ENCODE measurements at regions of chr12 and their contacts with region 1.

Region 1: GRCh38 chr12:6723607-6724396 is at the start of gene COPS7A:
- DNase-seq: peak; percentile 99
- H3K4me3 Mint-ChIP-seq: peak within 1 kb of the TSS; percentile 83
- H3K27ac Mint-ChIP-seq: peak within 1 kb of the TSS; percentile 84
- H3K4me1 Mint-ChIP-seq: peaks cover 25% of the 10 kb centered on the region
- H3K27me3 Mint-ChIP-seq: no peaks in the 10 kb centered on the region
- total RNA-seq, gene COPS7A: 37.6 to 39.4 TPM

Region 2: GRCh38 chr12:6554168-6555017 is 169.4 kb before region 1 on chr12:
- CTCF ChIA-PET with region 1: no interaction called
- POLR2A ChIA-PET with region 1: no interaction called
- intact Hi-C with region 1: no loop called
- DNase-seq: peak; percentile 86
- H3K4me3 Mint-ChIP-seq: peak overlapping the region; percentile 85
- H3K27ac Mint-ChIP-seq: peak overlapping the region; percentile 60
- H3K4me1 Mint-ChIP-seq: peaks cover 38% of the 10 kb centered on the region
- H3K27me3 Mint-ChIP-seq: no peaks in the 10 kb centered on the region

Region 3: GRCh38 chr12:6607751-6608591 is 115.8 kb before region 1 on chr12:
- CTCF ChIA-PET with region 1: interaction called, 3 read pairs
- POLR2A ChIA-PET with region 1: interaction called, 8 read pairs
- intact Hi-C with region 1: loop called (anchors 1 kb)
- DNase-seq: peak; percentile 82
- H3K4me3 Mint-ChIP-seq: no peak overlapping the region
- H3K27ac Mint-ChIP-seq: no peak overlapping the region
- H3K4me1 Mint-ChIP-seq: peaks cover 53% of the 10 kb centered on the region
- H3K27me3 Mint-ChIP-seq: no peaks in the 10 kb centered on the region

Region 4: GRCh38 chr12:6662906-6663742 is 60.7 kb before region 1 on chr12 and contains the start of gene ING4:
- CTCF ChIA-PET with region 1: no interaction called
- POLR2A ChIA-PET with region 1: no interaction called
- intact Hi-C with region 1: loop called (anchors 1 kb)
- DNase-seq: peak; percentile 98
- H3K4me3 Mint-ChIP-seq: peak within 1 kb of the TSS; percentile 91
- H3K27ac Mint-ChIP-seq: peak within 1 kb of the TSS; percentile 83
- H3K4me1 Mint-ChIP-seq: peaks cover 22% of the 10 kb centered on the region
- H3K27me3 Mint-ChIP-seq: no peaks in the 10 kb centered on the region
- total RNA-seq, gene ING4: 13.8 to 15.2 TPM

Region 5: GRCh38 chr12:6745741-6746525 is 22.1 kb after region 1 on chr12:
- CTCF ChIA-PET with region 1: no interaction called
- POLR2A ChIA-PET with region 1: interaction called, 8 read pairs
- intact Hi-C with region 1: loop called (anchors 1 kb)
- DNase-seq: peak; percentile 43
- H3K4me3 Mint-ChIP-seq: no peak overlapping the region
- H3K27ac Mint-ChIP-seq: peak overlapping the region; percentile 82
- H3K4me1 Mint-ChIP-seq: peaks cover 41% of the 10 kb centered on the region
- H3K27me3 Mint-ChIP-seq: no peaks in the 10 kb centered on the region

Region 6: DNA sequence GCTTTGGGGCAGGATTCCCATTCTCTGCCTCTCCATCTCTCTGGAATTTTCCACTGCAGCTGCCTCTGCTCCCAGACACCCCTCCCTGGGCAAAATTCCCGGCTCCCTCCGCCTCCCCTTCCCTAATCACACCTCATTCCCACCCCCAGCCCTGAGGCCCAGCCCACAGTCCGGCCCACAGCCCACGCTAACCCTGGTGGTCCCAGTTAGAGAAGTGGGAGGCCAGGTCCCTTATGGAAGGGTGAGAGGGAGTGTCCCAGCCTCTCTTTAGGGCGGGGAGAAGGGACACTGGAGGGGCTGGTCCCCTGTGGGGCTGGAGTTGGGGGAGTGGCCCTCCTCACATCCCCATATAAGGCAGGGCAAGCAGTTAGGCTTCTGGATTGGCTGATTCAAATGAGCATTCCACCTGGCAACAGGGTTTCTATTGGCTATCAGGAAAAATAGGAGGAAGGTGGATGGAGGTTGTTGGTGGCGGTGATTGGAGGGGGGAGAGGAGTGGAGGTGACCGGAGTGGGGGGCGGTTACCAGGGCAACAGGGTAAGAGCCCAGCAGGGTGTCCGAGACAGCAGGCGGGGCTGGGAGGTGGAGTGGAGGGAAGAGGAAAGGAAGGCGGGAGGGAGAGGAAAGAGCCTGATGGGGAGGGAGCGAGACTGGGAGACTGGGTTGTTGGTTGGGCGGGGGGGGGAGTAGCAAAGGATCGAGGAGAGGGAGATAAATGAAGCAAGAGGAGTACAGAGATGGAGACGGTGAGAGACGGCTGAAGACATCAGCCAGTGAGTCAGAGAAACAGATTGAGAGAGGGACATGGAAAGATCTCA is 40.4 kb after region 1 on chr12:
- CTCF ChIA-PET with region 1: interaction called, 15 read pairs
- POLR2A ChIA-PET with region 1: no interaction called
- intact Hi-C with region 1: no loop called
- DNase-seq: peak; percentile 72
- H3K4me3 Mint-ChIP-seq: peak overlapping the region; percentile 40
- H3K27ac Mint-ChIP-seq: no peak overlapping the region
- H3K4me1 Mint-ChIP-seq: peaks cover 29% of the 10 kb centered on the region
- H3K27me3 Mint-ChIP-seq: peaks cover 24% of the 10 kb centered on the region

Region 7: DNA sequence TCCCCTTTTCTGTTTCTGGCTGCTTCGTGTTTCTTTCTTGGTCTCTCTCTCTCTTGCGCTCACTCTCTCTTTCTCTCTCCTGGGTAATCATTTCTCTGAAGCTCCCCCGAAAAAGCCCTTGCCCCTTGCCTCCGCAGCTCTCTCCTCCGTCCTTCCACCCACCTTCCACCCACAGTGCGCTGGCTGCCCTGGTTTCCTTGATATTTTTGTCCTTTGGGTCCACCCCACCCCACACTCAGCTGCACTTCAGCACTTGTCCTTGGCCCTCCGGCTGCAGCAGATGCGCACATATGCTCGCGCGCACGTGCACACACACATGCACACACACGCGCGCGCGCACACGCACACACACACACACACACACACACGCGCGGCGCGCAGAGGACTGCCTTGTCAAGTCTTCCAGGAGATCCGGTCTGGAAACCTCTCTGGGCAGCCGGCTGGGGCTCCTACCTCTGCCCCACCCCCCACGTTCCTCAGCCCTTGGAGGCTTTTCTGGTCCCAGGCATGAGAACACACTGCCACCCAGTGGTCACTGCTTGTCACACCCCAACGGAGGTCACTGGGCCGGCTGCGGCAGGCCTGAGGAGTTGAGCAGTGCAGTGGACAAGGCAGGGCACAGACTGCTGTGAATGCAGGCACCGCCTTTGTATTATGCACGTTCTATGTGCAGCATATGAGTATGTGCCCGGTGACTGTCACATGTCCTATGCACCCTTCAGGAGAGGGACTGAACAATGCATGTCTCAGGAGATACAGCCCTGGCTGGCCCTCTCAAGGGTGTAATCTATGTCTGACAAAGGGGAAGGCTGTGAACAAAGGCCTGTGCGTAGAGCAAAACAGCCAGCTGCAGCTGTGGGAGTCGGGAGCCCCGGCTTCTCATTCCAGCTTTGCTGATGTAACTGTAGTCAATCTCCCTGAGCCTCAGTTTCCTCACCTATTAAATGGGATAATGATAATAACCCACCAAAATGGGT is 55.1 kb after region 1 on chr12:
- CTCF ChIA-PET with region 1: interaction called, 7 read pairs
- POLR2A ChIA-PET with region 1: interaction called, 3 read pairs
- intact Hi-C with region 1: loop called (anchors 1 kb)
- DNase-seq: peak; percentile 94
- H3K4me3 Mint-ChIP-seq: peak overlapping the region; percentile 67
- H3K27ac Mint-ChIP-seq: peak overlapping the region; percentile 46
- H3K4me1 Mint-ChIP-seq: peaks cover 77% of the 10 kb centered on the region
- H3K27me3 Mint-ChIP-seq: no peaks in the 10 kb centered on the region

Region 8: DNA sequence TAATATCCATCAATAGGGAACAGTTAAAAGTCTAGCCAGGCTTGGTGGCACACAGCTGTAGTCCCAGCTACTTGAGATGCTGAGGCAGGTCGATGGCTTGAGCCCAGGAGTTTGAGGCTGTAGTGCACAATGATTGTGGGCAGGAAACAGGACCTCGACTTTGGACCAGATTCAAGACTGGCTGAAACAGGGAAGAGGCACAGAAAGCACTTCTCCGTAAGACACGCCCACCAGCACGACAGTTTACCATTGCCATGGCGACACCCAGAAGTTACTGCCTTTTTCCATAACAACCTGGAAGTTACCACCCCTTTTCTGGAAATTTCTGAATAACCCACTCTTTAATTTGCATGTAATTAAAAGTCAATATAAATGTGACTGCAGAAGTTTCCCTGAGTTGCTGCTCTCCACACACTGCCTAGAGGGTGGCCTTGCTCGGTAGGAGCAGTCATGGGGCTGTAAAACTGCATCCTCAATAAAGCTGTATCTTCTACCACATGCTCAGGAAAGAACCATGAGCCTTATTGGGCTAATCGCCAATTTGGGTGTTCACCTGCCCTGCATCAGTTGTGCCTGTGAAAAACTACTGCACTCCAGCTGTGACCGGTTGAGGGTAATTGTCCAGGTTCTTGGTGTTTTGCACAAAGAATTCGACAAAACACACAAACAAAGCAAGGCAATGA is 176.2 kb after region 1 on chr12:
- CTCF ChIA-PET with region 1: no interaction called
- POLR2A ChIA-PET with region 1: no interaction called
- intact Hi-C with region 1: no loop called
- DNase-seq: peak; percentile 47
- H3K4me3 Mint-ChIP-seq: no peak overlapping the region
- H3K27ac Mint-ChIP-seq: no peak overlapping the region
- H3K4me1 Mint-ChIP-seq: peaks cover 7% of the 10 kb centered on the region
- H3K27me3 Mint-ChIP-seq: no peaks in the 10 kb centered on the region

Region 9: DNA sequence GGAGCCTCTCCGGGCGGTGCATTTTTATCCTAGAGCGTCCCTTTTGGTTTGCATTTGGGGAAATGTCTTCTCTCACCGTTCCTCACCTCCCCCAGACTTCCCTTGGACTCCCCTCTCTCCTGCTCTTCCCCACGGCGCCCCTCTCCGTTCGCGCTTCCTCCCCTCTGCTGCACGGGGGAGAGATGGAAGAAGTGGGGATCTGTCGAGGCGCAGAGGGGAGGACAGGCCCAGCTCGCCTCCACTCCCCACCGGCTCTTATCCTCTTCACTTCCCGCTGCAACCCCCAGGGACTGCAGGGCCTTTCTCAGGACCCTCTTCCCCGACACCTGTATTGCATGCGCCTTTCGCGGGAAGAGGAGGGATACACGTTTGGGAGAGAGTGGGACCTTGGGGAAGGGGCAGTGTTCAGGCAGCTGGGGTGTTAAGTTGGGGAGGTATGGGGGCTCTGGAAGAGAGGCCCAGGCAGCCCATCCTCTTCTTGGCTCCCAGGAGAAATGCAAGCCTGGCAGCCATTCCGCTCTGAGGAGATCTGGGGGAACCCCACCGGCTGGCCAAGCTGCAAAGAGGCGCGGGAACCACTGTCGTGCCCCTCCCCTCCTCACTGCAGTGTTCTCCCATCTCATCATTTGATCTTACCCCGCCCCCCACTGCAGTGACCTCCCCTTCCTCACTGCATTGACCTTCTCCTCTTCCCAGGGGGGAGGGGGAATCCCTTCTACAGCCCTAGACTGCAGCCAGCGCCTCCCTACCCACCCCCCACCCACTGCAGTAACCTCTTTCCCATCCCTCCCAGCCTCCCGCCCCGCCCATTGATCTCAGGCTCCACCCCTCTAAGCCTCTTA is 191.4 kb after region 1 on chr12:
- CTCF ChIA-PET with region 1: no interaction called
- POLR2A ChIA-PET with region 1: no interaction called
- intact Hi-C with region 1: no loop called
- DNase-seq: peak; percentile 54
- H3K4me3 Mint-ChIP-seq: peak overlapping the region; percentile 92
- H3K27ac Mint-ChIP-seq: peak overlapping the region; percentile 88
- H3K4me1 Mint-ChIP-seq: peaks cover 34% of the 10 kb centered on the region
- H3K27me3 Mint-ChIP-seq: no peaks in the 10 kb centered on the region

Measured in activated CD4-positive, alpha-beta memory T cell treated with anti-CD3 and anti-CD28 coated beads for 36 hours (primary cell).